ENCODE measurements at regions of chr1 and their contacts with region 1.

Region 1: DNA sequence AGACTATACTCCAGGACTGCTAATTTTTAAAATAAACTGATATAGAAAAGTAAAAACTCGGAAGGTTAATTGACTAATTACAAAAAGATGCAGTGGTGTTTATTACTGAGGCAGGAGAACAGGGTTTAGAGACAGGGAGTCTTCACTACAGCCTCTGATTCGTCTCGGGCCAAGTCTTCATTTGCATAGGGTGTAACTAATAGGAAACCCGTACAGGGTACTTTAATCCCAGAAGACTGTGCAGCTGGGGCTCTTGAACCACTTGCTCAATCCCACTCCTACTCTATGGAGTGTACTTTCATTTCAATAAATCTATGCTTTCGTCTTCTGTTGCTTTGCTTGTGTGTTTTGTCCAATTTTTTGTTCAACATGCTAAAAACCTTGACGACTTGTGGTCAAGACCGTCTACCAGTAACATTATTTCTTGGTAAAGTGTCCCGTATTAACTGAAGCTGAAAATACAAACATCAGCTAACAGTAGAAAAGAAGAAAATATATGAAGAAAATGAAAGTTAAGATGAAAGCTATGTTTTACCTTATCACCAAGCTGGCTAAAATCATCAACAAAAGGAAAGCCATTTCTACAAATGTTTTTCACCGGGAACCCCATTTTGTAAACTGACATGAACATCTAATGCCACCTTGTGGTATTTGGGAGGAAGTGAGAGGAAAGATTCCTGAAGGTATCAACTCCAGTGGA is 8.0 kb downstream of the SDHB start:
- DNase-seq: no peak
- ATAC-seq: no peak
- H3K4me3 Mint-ChIP-seq: no peak overlapping the region
- H3K27ac Mint-ChIP-seq: peak overlapping the region; percentile 68
- H3K4me1 Mint-ChIP-seq: peaks cover 19% of the 10 kb centered on the region
- H3K27me3 Mint-ChIP-seq: no peaks in the 10 kb centered on the region
- CTCF ChIP-seq: peak; percentile 73

Region 2: DNA sequence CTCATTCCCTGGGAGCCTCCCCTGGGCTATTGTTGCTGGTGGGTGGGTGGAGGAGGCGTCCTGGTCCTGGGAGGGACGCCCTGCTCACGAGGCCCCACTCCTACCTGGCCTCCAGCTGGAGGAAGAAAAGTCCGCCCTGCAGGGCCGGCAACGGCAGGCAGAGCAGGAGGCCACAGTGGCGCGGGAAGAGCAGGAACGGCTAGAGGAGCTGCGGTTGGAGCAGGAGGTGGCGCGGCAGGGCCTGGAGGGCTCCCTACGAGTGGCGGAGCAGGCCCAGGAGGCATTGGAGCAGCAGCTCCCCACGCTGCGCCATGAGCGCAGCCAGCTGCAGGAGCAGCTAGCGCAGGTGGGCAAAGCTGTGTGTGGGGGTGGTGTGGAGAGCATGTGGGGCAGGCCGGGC is 99.1 kb before region 1 on chr1:
- CTCF ChIA-PET with region 1: interaction called, 22 read pairs
- POLR2A ChIA-PET with region 1: no interaction called
- intact Hi-C with region 1: no loop called
- DNase-seq: no peak
- ATAC-seq: no peak
- H3K4me3 Mint-ChIP-seq: no peak overlapping the region
- H3K27ac Mint-ChIP-seq: no peak overlapping the region
- H3K4me1 Mint-ChIP-seq: no peaks in the 10 kb centered on the region
- H3K27me3 Mint-ChIP-seq: no peaks in the 10 kb centered on the region
- CTCF ChIP-seq: no peak

Region 3: DNA sequence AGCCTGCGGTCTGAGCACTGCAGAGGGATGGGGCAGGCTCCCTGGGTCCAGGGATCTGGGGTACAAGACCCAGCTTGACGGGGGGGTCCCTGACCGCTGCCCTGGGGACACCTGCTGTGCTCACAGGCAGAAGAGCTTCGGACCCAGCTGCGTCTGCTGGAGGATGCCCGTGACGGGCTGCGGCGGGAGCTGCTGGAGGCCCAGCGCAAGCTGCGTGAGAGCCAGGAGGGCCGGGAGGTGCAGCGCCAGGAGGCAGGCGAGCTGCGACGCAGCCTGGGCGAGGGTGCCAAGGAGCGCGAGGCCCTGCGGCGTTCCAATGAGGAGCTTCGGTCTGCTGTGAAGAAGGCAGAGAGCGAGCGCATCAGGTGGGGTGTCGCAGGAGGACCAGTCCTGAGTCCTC is 90.6 kb before region 1 on chr1:
- CTCF ChIA-PET with region 1: interaction called, 22 read pairs
- POLR2A ChIA-PET with region 1: interaction called, 3 read pairs
- intact Hi-C with region 1: no loop called
- DNase-seq: no peak
- ATAC-seq: no peak
- H3K4me3 Mint-ChIP-seq: no peak overlapping the region
- H3K27ac Mint-ChIP-seq: no peak overlapping the region
- H3K4me1 Mint-ChIP-seq: no peaks in the 10 kb centered on the region
- H3K27me3 Mint-ChIP-seq: no peaks in the 10 kb centered on the region
- CTCF ChIP-seq: no peak

Region 4: GRCh38 chr1:17056551-17056950 is 10.8 kb after region 1 on chr1:
- CTCF ChIA-PET with region 1: no interaction called
- POLR2A ChIA-PET with region 1: no interaction called
- intact Hi-C with region 1: no loop called
- DNase-seq: no peak
- ATAC-seq: no peak
- H3K4me3 Mint-ChIP-seq: no peak overlapping the region
- H3K27ac Mint-ChIP-seq: no peak overlapping the region
- H3K4me1 Mint-ChIP-seq: peaks cover 11% of the 10 kb centered on the region
- H3K27me3 Mint-ChIP-seq: no peaks in the 10 kb centered on the region
- CTCF ChIP-seq: no peak

Measured in activated CD8-positive, alpha-beta T cell treated with anti-CD3 and anti-CD28 coated beads for 36 hours (primary cell).